HepG2 (cell line): ENCODE measurements at regions of chr14 and their contacts with region 1.

Region 1: DNA sequence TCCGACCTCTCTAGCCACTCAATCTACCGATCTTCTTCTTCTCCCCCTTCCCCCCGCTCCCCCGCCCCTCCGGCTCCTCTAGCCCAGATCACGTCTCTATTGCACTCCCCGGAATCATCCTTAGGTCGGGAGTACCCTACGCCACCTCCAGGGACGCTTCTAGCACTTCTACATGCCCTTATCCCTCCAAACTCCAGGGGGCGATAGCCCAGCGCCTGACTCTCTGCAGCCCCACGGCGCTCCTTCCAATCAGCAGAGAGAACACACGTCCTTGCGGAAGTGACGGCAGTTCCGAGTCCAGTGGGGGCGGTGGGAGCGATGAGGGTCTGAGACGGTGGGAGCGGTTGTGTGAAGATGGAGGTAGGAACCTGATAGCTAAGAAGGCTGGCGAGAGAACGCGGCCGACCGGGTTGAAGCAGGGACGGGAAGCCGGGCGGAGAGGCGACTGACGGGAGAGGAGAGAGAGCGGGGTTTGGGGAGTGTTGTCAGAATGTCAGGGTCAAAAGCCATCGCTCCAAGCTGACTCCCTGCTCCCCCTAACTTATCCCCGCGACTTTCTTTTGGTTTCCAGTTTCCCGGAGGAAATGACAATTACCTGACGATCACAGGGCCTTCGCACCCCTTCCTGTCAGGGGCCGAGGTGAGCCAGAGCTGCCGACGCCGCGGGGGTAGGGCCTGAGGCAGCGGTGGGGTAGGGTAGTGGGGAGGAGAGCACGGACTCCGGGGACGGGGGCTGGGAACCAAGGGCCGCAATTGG is at the starts of genes RAB2B and TOX4:
- DNase-seq: peak; percentile 100
- ATAC-seq: peak; percentile 97
- H3K4me3 ChIP-seq: peak within 1 kb of the TSS; percentile 83 to 99 (median 87)
- H3K27ac ChIP-seq: peak within 1 kb of the TSS; percentile 87
- H3K4me1 ChIP-seq: peaks cover 34% of the 10 kb centered on the region
- H3K27me3 ChIP-seq: no peaks in the 10 kb centered on the region; a peak in 1 of 5 replicates
- CTCF ChIP-seq: peak; percentile 99
- EP300 ChIP-seq: peak; percentile 14 to 50; a peak in 2 of 4 replicates
- POLR2A ChIP-seq: peak; percentile 85 to 88
- RAD21 ChIP-seq: peak; percentile 49
- total RNA-seq, gene RAB2B: 36.0 and 46.4 TPM in 2 replicates
- total RNA-seq, gene TOX4: 71.8 and 124 TPM in 2 replicates

Region 2: GRCh38 chr14:20461274-20462001 is 1015.7 kb before region 1 on chr14 and contains the start of gene PIP4P1:
- CTCF ChIA-PET with region 1: no interaction called
- POLR2A ChIA-PET with region 1: no interaction called
- in situ Hi-C with region 1: no loop called
- intact Hi-C with region 1: loop called (anchors 2 kb)
- DNase-seq: peak; percentile 100
- ATAC-seq: peak; percentile 97
- H3K4me3 ChIP-seq: peak within 1 kb of the TSS; percentile 67 to 89 (median 78)
- H3K27ac ChIP-seq: peak within 1 kb of the TSS; percentile 80
- H3K4me1 ChIP-seq: peaks cover 56% of the 10 kb centered on the region
- H3K27me3 ChIP-seq: no peaks in the 10 kb centered on the region; a peak in 1 of 5 replicates
- CTCF ChIP-seq: no peak; the same call in 1 of the 2 replicates
- EP300 ChIP-seq: peak; percentile 25 to 56; a peak in 3 of 4 replicates
- POLR2A ChIP-seq: peak in 1 of 2 experiments; percentile 85; a peak in 3 of 4 replicates
- RAD21 ChIP-seq: peak; percentile 51
- total RNA-seq, gene PIP4P1: 31.9 and 33.4 TPM in 2 replicates

Region 3: GRCh38 chr14:21383848-21384493 is 93.1 kb before region 1 on chr14 and contains the start of gene SUPT16H:
- CTCF ChIA-PET with region 1: no interaction called
- POLR2A ChIA-PET with region 1: interaction called, 9 read pairs
- in situ Hi-C with region 1: no loop called
- intact Hi-C with region 1: loop called (anchors 1 kb)
- DNase-seq: peak; percentile 94
- ATAC-seq: peak; percentile 91
- H3K4me3 ChIP-seq: peak within 1 kb of the TSS; percentile 74 to 97 (median 90)
- H3K27ac ChIP-seq: peak within 1 kb of the TSS; percentile 92
- H3K4me1 ChIP-seq: peaks cover 43% of the 10 kb centered on the region
- H3K27me3 ChIP-seq: no peaks in the 10 kb centered on the region; a peak in 1 of 5 replicates
- CTCF ChIP-seq: peak; percentile 11; the same call in 1 of the 2 replicates
- EP300 ChIP-seq: peak in 1 of 2 experiments; percentile 25; a peak in 2 of 4 replicates
- POLR2A ChIP-seq: peak; percentile 80 to 92
- RAD21 ChIP-seq: peak; percentile 46; the same call in 1 of the 2 replicates
- total RNA-seq, gene SUPT16H: 230 and 340 TPM in 2 replicates

Region 4: DNA sequence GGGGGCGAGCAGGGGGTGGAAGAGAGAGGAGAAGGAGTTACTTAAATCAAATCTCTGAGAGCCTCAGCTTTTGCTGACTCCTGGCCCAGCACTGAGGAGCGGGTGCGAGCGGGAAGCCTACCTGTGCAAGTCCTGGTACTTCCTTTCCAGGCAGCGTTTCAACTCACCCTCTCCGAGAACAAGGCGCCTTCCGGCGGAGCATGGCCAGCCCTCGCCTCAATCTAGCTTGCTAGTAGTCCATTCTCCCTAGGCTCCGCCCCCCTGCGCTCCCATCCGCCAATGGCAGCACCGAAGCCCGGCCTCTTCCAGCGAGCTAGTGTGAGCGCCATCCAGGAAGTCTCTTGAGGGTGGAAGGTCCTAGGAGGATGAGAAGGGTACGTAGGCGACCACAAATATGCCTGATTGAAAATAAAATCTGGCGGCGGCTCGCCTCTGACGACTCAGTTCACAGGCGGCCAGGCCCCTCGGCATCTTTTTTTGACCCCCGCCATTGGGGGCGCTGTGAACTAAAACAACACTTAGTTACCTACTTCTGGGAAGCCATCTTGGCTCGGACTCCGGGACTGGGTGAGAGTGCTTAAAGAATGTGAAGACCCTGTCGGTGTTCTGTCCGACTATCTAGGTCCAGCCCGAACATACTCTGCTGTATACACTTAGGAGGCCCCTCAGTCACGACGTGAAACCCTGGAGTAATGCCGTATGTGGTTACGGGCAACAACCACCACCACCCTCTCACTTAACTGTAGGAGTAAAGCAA is 21.0 kb before region 1 on chr14 and contains the start of gene CHD8:
- CTCF ChIA-PET with region 1: interaction called, 19 read pairs
- POLR2A ChIA-PET with region 1: interaction called, 47 read pairs
- in situ Hi-C with region 1: no loop called
- intact Hi-C with region 1: loop called (anchors 1 kb)
- DNase-seq: peak; percentile 100
- ATAC-seq: peak; percentile 99
- H3K4me3 ChIP-seq: peak within 1 kb of the TSS; percentile 90 to 95 (median 93)
- H3K27ac ChIP-seq: peak within 1 kb of the TSS; percentile 96
- H3K4me1 ChIP-seq: peaks cover 38% of the 10 kb centered on the region
- H3K27me3 ChIP-seq: no peaks in the 10 kb centered on the region; a peak in 1 of 5 replicates
- CTCF ChIP-seq: peak; percentile 96
- EP300 ChIP-seq: peak in 1 of 2 experiments; percentile 46; a peak in 1 of 4 replicates
- POLR2A ChIP-seq: peak; percentile 91 to 95
- RAD21 ChIP-seq: peak; percentile 63
- total RNA-seq, gene CHD8: 79.6 and 92.9 TPM in 2 replicates

Region 5: DNA sequence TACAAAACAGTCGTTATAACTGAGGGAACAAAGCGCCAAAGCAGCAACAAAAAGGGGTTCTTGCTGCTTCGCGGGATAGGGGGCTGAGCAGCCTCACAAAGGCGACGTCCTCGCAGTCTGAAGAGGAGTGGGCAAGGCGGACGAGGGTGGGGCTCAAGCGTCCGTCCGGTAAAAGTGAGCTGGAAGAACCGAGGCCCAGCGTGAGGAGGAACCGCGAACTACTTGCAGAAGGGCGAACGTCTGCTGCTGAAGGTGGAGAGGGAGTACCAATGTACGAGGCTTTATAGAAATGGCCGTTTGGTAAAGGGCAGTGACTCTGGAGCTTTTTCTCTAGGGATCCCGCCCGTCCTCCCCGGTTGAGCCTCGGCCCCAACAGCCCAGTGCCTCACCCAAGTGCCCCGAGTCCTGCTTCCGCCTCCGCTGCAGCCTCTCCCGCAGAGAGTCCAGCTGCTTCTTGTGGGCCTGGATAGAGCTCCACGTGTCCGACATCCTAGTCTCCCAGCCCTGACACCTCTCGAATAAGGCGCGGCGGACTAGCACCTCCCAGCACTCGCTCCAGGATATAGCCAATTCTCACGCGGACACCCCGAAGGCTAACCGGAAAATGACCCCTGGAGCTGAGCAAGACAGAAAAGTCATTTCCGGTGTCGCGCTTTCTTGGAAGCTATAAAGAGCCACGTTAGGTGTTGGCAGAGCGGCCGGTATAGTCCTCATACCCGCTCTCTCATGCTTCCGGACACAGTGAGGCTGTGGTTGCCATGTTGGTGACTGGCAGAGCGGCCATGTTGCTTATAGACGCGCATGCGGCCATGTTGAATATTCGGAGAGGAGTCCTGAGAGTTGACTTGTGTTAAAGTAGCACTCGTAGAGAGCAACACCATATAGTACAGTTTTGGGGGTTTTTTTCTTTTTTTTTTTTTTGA is 33.9 kb after region 1 on chr14 and contains the start of gene METTL3:
- CTCF ChIA-PET with region 1: no interaction called
- POLR2A ChIA-PET with region 1: interaction called, 36 read pairs
- in situ Hi-C with region 1: no loop called
- intact Hi-C with region 1: loop called (anchors 1 kb)
- DNase-seq: peak; percentile 100
- ATAC-seq: peak; percentile 97
- H3K4me3 ChIP-seq: peak within 1 kb of the TSS; percentile 84 to 97 (median 87)
- H3K27ac ChIP-seq: peak within 1 kb of the TSS; percentile 80
- H3K4me1 ChIP-seq: peaks cover 53% of the 10 kb centered on the region
- H3K27me3 ChIP-seq: no peaks in the 10 kb centered on the region; a peak in 1 of 5 replicates
- CTCF ChIP-seq: peak; percentile 53
- EP300 ChIP-seq: 0 out of 4 replicates have a peak, but pooled peaks of 1 of the 2 experiments have one; percentile 1
- POLR2A ChIP-seq: peak; percentile 97
- RAD21 ChIP-seq: peak; percentile 10; the same call in 1 of the 2 replicates
- total RNA-seq, gene METTL3: 114 and 123 TPM in 2 replicates

Region 6: GRCh38 chr14:21557084-21557901 is 80.2 kb after region 1 on chr14:
- CTCF ChIA-PET with region 1: interaction called, 12 read pairs
- POLR2A ChIA-PET with region 1: no interaction called
- in situ Hi-C with region 1: no loop called
- intact Hi-C with region 1: loop called (anchors 1 kb)
- DNase-seq: peak; percentile 99
- ATAC-seq: peak; percentile 95
- H3K4me3 ChIP-seq: peak overlapping the region; percentile 27 to 69 (median 32)
- H3K27ac ChIP-seq: peak overlapping the region; percentile 60
- H3K4me1 ChIP-seq: peaks cover 26% of the 10 kb centered on the region
- H3K27me3 ChIP-seq: no peaks in the 10 kb centered on the region
- CTCF ChIP-seq: peak; percentile 85
- EP300 ChIP-seq: peak; percentile 70 to 95
- POLR2A ChIP-seq: no peak
- RAD21 ChIP-seq: peak; percentile 89